ENCODE measurements at regions of chr10 and their contacts with region 1.

Region 1: DNA sequence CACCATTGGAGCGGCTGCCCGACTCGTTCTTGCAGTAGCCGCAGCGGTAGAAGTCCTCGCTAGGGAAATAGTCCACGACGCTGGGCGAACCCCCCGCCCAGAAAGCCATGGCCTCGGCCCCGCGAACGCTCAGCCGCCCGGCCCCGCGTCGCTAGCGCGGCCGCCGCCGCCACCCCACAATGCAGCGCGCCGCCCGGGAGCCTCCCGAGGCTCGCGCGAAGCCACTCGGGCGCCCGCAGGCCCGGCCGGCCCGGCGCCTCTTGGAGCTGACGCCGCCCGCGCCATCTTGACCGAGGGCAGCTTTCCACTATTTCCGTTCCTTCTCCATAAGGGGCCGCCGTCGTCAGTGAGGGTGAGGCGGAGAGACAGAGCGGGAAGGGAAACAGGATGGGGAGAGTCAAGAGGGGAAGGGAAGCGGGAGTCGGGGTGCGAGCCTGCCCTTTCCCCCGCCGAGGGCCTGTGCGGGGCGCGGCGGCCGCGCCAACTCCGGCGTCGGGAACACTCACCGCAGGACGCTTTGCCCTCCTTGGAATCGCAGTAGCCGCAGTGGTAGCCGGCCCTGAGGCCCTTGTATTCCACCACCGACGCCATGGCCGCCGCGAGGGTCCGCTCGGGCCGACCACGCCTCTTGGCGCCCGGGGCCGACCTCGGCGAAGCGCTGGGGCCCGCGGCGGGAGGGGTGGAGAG is at the start of gene ATE1:
- DNase-seq: peak; percentile 95
- H3K4me3 ChIP-seq: peak within 1 kb of the TSS; percentile 78 to 100 (median 92)
- H3K27ac ChIP-seq: peak within 1 kb of the TSS; percentile 92 to 99 (median 98)
- H3K4me1 ChIP-seq: peaks cover 3 to 41% (median 18%) of the 10 kb centered on the region in 4 donors
- H3K27me3 ChIP-seq: no peaks in the 10 kb centered on the region
- CTCF ChIP-seq: no peak
- EP300 ChIP-seq: no peak
- POLR2A ChIP-seq: peak; percentile 61 to 79
- total RNA-seq, gene ATE1: 31.4 to 49.6 (median 37.0) TPM

Region 2: DNA sequence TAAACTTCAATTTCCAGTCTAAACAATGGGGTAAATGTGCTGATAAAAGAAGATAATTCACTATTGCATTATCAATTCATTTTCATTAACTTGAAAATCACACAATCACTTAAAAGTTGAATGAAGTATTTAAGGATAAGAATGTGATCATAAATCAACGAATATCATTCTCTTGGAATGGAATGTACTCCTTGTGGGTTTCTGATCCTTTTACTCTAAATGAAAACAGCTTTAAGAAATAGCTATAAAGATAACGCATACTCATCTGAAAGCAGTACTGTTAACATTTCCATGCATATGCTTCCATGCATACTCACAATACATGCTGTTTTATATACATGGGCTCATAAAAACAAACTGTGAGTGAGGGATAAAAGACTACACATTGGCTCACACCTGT is 108.9 kb before region 1 on chr10:
- intact Hi-C with region 1: no loop called
- DNase-seq: no peak
- H3K4me3 ChIP-seq: no peak overlapping the region
- H3K27ac ChIP-seq: no peak overlapping the region
- H3K4me1 ChIP-seq: peaks cover 0 to 8% (median 0%) of the 10 kb centered on the region in 4 donors
- H3K27me3 ChIP-seq: no peaks in the 10 kb centered on the region
- CTCF ChIP-seq: no peak
- EP300 ChIP-seq: no peak
- POLR2A ChIP-seq: no peak

Region 3: DNA sequence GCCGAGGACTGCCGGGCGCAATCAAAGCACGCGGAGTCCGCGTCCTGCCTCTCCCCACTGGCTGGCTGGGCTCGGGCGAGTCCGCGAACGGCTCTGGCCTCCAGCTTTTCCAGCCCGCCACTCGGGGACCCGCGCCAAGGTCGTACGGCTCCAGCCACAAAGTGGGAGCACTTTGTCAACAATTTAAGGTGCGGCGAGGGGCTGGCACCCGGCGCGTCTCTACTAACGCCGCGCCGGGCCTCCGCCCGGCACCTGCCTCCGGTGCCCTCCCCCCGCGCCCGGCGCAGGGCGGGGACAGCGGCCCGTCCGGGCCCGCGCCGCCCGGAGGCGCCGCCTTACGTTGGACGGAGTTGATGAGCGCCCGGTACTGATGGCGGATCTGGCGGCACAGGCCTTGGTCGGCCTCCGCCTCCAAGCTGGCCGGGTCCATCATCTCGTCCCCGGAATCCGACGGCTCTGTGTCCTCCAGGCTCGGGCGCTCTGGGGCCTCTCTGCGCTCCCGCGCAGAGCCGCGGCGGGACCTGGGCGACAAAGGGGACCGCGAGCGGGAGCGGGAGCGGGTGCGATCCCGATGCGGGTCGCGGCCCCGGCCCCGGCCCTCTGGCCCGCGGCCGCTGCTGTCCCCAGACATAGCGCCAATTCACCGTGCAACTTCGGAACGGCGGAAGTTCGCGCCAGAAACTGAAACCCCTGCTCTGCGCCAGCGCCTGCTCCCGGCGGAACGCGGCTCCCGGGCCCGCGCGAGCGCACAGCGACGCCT is 46.7 kb after region 1 on chr10 and contains the start of gene NSMCE4A:
- intact Hi-C with region 1: loop called (anchors 5 kb)
- DNase-seq: peak; percentile 89
- H3K4me3 ChIP-seq: peak within 1 kb of the TSS; percentile 72 to 92 (median 82)
- H3K27ac ChIP-seq: peak within 1 kb of the TSS; percentile 96 to 98 (median 97)
- H3K4me1 ChIP-seq: peaks cover 0 to 30% (median 27%) of the 10 kb centered on the region in 4 donors
- H3K27me3 ChIP-seq: no peaks in the 10 kb centered on the region
- CTCF ChIP-seq: no peak
- EP300 ChIP-seq: no peak
- POLR2A ChIP-seq: no peak
- total RNA-seq, gene NSMCE4A: 104 to 160 (median 118) TPM

Region 4: DNA sequence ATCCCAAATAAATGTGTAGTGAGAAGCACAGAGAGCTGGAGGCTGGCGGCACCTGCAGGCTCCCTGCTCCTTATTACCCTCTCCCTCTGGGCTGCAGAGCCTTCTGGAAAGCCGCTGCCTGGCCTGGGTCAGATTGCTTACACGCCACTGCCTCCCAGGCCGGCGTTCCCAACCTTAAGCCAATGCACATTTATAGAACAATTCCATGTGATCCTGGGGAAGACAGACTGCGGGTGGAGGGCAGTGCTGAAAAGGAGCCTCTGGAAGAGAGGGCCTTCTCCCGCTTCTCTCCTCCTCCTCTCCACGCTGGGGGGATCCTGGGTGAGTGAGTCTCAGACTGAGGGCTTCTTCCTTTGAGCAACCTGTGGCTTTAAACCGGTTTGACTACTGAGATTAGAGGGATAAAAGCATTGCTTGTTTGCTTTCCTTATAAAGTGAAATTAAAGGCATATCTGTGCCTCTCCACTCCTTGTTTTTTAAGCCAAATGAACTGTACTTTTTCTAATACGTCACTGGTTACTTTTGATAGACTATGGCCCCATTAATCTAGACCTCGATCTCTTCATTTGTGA is 66.5 kb after region 1 on chr10:
- intact Hi-C with region 1: loop called (anchors 5 kb)
- DNase-seq: peak; percentile 92
- H3K4me3 ChIP-seq: peak overlapping the region; percentile 15 to 36 (median 31)
- H3K27ac ChIP-seq: peak overlapping the region; percentile 83 to 89 (median 88)
- H3K4me1 ChIP-seq: peaks cover 0 to 68% (median 63%) of the 10 kb centered on the region in 4 donors
- H3K27me3 ChIP-seq: no peaks in the 10 kb centered on the region
- CTCF ChIP-seq: no peak
- EP300 ChIP-seq: peak in 1 of 4 donors; percentile 69
- POLR2A ChIP-seq: peak in 1 of 2 donors; percentile 39

Region 5: GRCh38 chr10:122051251-122051996 is 123.4 kb after region 1 on chr10:
- intact Hi-C with region 1: loop called (anchors 5 kb)
- DNase-seq: peak; percentile 80
- H3K4me3 ChIP-seq: no peak overlapping the region
- H3K27ac ChIP-seq: peak overlapping the region; percentile 58 to 68 (median 66)
- H3K4me1 ChIP-seq: peaks cover 0 to 20% (median 11%) of the 10 kb centered on the region in 4 donors
- H3K27me3 ChIP-seq: no peaks in the 10 kb centered on the region
- CTCF ChIP-seq: peak in 3 of 4 experiments; percentile 53 to 73 (median 61)
- EP300 ChIP-seq: no peak
- POLR2A ChIP-seq: no peak